Motor neuron (in vitro differentiated cells): ENCODE measurements at regions of chr18 and their contacts with region 1.

Region 1: DNA sequence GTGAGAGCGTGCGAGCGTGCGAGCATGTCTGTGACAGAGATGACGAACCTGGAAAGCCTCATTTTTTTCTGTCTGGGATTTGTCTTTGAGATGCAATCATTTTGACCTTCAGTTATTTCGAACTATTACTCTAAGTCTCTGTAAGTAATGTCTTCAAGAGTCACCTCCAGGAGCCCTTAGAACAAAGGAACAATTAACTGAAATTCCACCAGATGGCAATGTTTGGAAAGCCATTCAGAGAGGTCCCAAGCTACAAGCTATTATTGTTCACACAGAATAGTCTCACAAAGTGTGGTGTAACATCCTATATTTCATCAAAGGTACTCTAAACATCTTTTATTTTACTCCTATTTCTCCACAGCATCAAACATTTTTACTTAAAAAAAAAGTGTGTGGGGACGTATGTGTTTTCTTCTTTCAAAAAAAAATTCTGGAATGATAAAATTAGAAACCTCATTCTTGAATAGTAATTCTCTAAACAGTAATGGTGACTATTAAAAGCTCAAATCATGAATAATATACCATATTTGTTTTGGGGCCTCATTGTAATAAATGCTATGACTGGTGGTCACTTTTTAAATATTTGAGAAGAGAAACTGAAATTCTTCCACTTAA is 35.1 kb upstream of the MAPRE2 start:
- ATAC-seq: peak; percentile 87 to 96 (median 94)
- H3K4me3 ChIP-seq: no peak overlapping the region
- H3K27ac ChIP-seq: no peak overlapping the region
- H3K4me1 ChIP-seq: peaks cover 0 to 5% of the 10 kb centered on the region in 2 donors

Region 2: DNA sequence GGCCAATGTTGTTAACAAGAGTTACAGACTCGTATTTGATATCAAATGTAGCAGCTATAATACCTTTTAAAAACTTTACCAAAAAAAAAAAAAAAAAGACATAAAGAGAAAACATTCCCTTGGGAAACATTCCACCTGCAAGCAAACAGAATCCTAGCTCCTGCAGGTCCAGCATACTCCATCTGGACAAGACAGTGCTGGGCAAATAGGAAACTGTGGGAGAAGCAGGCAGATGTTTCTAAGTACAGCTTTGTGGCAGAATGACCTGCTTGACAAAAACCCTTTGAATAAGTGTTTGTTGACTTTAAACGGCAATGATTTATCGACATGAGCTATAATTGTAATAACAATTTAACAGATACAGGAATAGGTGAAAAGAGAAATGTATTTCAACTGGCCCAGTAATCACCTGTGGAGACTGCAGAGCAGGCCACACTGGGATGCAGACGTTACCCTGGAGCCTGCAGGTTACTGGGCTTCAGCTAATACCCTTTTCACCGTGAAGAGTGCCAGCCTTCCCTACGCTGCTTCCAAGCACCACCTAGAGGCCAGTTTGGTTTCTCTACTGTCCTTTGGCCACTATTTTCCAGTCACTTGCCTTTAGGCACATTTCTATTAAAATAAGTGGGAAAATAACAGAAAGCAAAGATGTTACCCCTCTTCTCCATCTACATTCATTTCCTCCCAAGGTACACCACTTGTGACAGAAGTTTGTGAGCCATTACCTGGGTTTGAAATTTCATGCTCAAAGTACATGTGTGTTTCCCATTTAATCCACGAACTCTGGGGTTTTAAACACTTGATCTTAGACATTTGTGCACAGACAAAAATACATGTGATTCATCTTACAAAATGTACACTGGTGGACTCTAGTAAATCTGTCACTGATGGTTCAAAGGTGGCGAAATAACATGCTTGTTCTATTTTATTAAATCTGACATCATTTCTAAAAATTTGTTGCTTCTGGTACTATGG is 137.8 kb after region 1 on chr18:
- in situ Hi-C with region 1: loop called in 2 of 9 experiments (anchors 10 to 25 kb)
- ATAC-seq: peak; percentile 86 to 99 (median 96)
- H3K4me3 ChIP-seq: no peak overlapping the region
- H3K27ac ChIP-seq: no peak overlapping the region
- H3K4me1 ChIP-seq: no peaks in the 10 kb centered on the region

Region 3: GRCh38 chr18:35158728-35159450 is 152.8 kb after region 1 on chr18:
- in situ Hi-C with region 1: loop called in 1 of 9 experiments (anchors 10 kb)
- ATAC-seq: peak in 5 of 8 experiments; percentile 12 to 78 (median 43)
- H3K4me3 ChIP-seq: no peak overlapping the region
- H3K27ac ChIP-seq: no peak overlapping the region
- H3K4me1 ChIP-seq: peaks cover 0 to 7% of the 10 kb centered on the region in 2 donors

Region 4: DNA sequence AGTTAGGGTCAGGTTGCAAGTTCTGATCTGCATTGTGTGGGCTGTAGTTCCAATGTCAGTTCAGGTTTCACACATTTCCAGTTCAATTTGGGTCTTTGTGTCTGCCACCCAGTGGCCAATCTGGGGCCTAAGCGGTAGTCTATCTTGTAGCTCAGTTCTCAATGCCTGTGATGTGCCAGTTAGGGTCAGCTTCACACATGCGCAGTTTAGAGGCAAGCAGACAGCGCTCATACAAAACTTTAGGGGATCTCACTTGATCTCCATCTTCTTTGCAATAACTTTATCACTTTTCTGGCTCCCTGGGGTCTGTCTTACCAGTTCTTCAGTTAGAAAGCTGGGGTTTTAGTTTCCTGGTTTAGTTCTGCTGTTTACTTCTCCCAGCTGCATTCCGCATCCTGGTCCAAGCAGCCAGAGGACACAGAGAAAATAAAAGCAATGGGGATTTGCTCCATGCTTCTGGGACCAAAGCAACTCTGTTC is 349.1 kb after region 1 on chr18:
- in situ Hi-C with region 1: loop called in 1 of 9 experiments (anchors 25 kb)
- ATAC-seq: peak; percentile 83 to 100 (median 96)
- H3K4me3 ChIP-seq: no peak overlapping the region
- H3K27ac ChIP-seq: no peak overlapping the region
- H3K4me1 ChIP-seq: no peaks in the 10 kb centered on the region